ENCODE measurements at regions of chr18 and their contacts with region 1.

Region 1: GRCh38 chr18:32271672-32272208 is 81.9 kb downstream of the MEP1B start:
- DNase-seq: peak in 4 of 14 experiments; percentile 13 to 28 (median 22)
- ATAC-seq: peak; percentile 37
- H3K4me3 ChIP-seq: no peak overlapping the region
- H3K4me3 Mint-ChIP-seq: no peak overlapping the region
- H3K27ac ChIP-seq: no peak overlapping the region
- H3K27ac Mint-ChIP-seq: no peak overlapping the region
- H3K4me1 ChIP-seq: no peaks in the 10 kb centered on the region
- H3K4me1 Mint-ChIP-seq: no peaks in the 10 kb centered on the region
- H3K27me3 ChIP-seq: peaks cover 0 to 5% of the 10 kb centered on the region in 2 experiments
- H3K27me3 Mint-ChIP-seq: peaks cover 30% of the 10 kb centered on the region
- CTCF ChIP-seq: peak; percentile 58

Region 2: GRCh38 chr18:32317651-32318050 is 45.9 kb after region 1 on chr18:
- CTCF ChIA-PET with region 1: no interaction called
- POLR2A ChIA-PET with region 1: no interaction called
- intact Hi-C with region 1: loop called in 1 of 2 experiments (anchors 5 kb)
- DNase-seq: no peak
- ATAC-seq: no peak
- H3K4me3 ChIP-seq: no peak overlapping the region
- H3K4me3 Mint-ChIP-seq: no peak overlapping the region
- H3K27ac ChIP-seq: no peak overlapping the region
- H3K27ac Mint-ChIP-seq: no peak overlapping the region
- H3K4me1 ChIP-seq: no peaks in the 10 kb centered on the region
- H3K4me1 Mint-ChIP-seq: no peaks in the 10 kb centered on the region
- H3K27me3 ChIP-seq: peaks cover 0 to 2% of the 10 kb centered on the region in 2 experiments
- H3K27me3 Mint-ChIP-seq: peaks cover 32% of the 10 kb centered on the region
- CTCF ChIP-seq: no peak

Measured in CD4-positive, alpha-beta T cell (primary cell).